Activated CD4-positive, alpha-beta T cell treated with anti-CD3 and anti-CD28 coated beads for 36 hours (primary cell): ENCODE measurements at regions of chr14 and their contacts with region 1.

Region 1: GRCh38 chr14:106417224-106418049 is 891.1 kb downstream of the TMEM121 start:
- DNase-seq: peak; percentile 99
- ATAC-seq: peak; percentile 91
- H3K4me3 Mint-ChIP-seq: no peak overlapping the region
- H3K27ac Mint-ChIP-seq: no peak overlapping the region
- H3K4me1 Mint-ChIP-seq: peaks cover 11% of the 10 kb centered on the region
- H3K27me3 Mint-ChIP-seq: peaks cover 6% of the 10 kb centered on the region

Region 2: GRCh38 chr14:106228541-106229158 is 188.8 kb before region 1 on chr14:
- CTCF ChIA-PET with region 1: interaction called, 22 read pairs
- POLR2A ChIA-PET with region 1: no interaction called
- intact Hi-C with region 1: no loop called
- DNase-seq: peak; percentile 64
- ATAC-seq: peak; percentile 88
- H3K4me3 Mint-ChIP-seq: peak overlapping the region; percentile 64
- H3K27ac Mint-ChIP-seq: peak overlapping the region; percentile 98
- H3K4me1 Mint-ChIP-seq: peaks cover 67% of the 10 kb centered on the region
- H3K27me3 Mint-ChIP-seq: no peaks in the 10 kb centered on the region

Region 3: GRCh38 chr14:106308839-106309389 is 108.5 kb before region 1 on chr14:
- CTCF ChIA-PET with region 1: interaction called, 50 read pairs
- POLR2A ChIA-PET with region 1: no interaction called
- intact Hi-C with region 1: loop called (anchors 1 to 5 kb)
- DNase-seq: peak; percentile 98
- ATAC-seq: peak; percentile 99
- H3K4me3 Mint-ChIP-seq: no peak overlapping the region
- H3K27ac Mint-ChIP-seq: no peak overlapping the region
- H3K4me1 Mint-ChIP-seq: no peaks in the 10 kb centered on the region
- H3K27me3 Mint-ChIP-seq: no peaks in the 10 kb centered on the region

Region 4: GRCh38 chr14:106378191-106378590 is 39.2 kb before region 1 on chr14:
- CTCF ChIA-PET with region 1: interaction called, 246 read pairs
- POLR2A ChIA-PET with region 1: no interaction called
- intact Hi-C with region 1: loop called in 1 of 2 experiments (anchors 5 kb)
- DNase-seq: peak; percentile 75
- ATAC-seq: peak; percentile 81
- H3K4me3 Mint-ChIP-seq: no peak overlapping the region
- H3K27ac Mint-ChIP-seq: no peak overlapping the region
- H3K4me1 Mint-ChIP-seq: peaks cover 22% of the 10 kb centered on the region
- H3K27me3 Mint-ChIP-seq: no peaks in the 10 kb centered on the region

Region 5: GRCh38 chr14:106459971-106460730 is 42.7 kb after region 1 on chr14:
- CTCF ChIA-PET with region 1: interaction called, 287 read pairs
- POLR2A ChIA-PET with region 1: no interaction called
- intact Hi-C with region 1: no loop called
- DNase-seq: peak; percentile 84
- ATAC-seq: peak; percentile 76
- H3K4me3 Mint-ChIP-seq: no peak overlapping the region
- H3K27ac Mint-ChIP-seq: no peak overlapping the region
- H3K4me1 Mint-ChIP-seq: peaks cover 2% of the 10 kb centered on the region
- H3K27me3 Mint-ChIP-seq: no peaks in the 10 kb centered on the region

Region 6: DNA sequence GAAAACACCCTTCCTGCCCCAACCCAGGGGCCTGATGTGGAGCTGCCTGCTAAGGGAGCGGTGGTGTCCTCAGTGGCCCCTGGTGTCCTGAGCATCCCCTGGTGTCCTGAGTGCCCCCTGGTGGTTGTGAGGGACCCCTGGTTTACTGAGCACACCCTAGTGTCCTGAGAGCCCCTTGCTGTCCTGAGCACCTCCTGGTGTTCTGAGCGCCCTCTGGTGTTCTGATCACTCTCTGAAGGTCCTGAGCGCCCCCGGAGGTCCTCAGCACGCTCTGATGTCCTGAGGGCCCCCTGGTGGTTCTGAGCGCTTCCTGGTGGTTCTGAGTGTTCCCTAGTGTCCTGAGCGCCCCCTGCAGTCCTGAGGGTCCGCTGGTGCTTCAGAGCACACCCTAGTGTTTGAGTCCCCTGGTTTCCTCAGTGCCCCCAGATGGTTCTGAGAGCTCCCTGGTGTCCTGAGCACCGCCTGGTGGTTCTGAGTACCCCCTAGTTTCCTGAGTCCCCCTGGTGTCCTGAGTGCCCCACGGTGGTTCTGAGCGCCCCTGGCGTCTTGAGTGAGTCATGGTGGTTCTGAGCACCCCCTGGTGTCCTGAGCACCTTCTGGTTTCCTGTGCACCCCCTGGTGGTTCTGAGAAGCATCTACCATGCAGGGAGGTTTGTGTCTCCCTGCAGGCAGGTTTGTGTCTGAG is 113.1 kb after region 1 on chr14:
- CTCF ChIA-PET with region 1: interaction called, 50 read pairs
- POLR2A ChIA-PET with region 1: no interaction called
- intact Hi-C with region 1: no loop called
- DNase-seq: peak; percentile 64
- ATAC-seq: peak; percentile 87
- H3K4me3 Mint-ChIP-seq: no peak overlapping the region
- H3K27ac Mint-ChIP-seq: no peak overlapping the region
- H3K4me1 Mint-ChIP-seq: no peaks in the 10 kb centered on the region
- H3K27me3 Mint-ChIP-seq: peaks cover 10% of the 10 kb centered on the region